Lower leg skin (tissue), 4 donors: ENCODE measurements at regions of chr2 and their contacts with region 1.

Region 1: GRCh38 chr2:132547074-132547687 is 122.8 kb downstream of the LYPD1 start:
- DNase-seq: peak; percentile 72 to 90
- H3K4me3 ChIP-seq: no peak overlapping the region
- CTCF ChIP-seq: peak in 1 of 3 donors; percentile 31
- POLR2A ChIP-seq: no peak

Region 2: GRCh38 chr2:133171393-133172004 is 624.3 kb after region 1 on chr2:
- intact Hi-C with region 1: loop called (anchors 10 kb)
- DNase-seq: peak in 1 of 2 donors; percentile 14
- H3K4me3 ChIP-seq: no peak overlapping the region
- CTCF ChIP-seq: no peak
- POLR2A ChIP-seq: no peak

Region 3: GRCh38 chr2:133855526-133855925 is 1308.3 kb after region 1 on chr2:
- intact Hi-C with region 1: loop called (anchors 10 kb)
- DNase-seq: no peak
- H3K4me3 ChIP-seq: no peak overlapping the region
- CTCF ChIP-seq: no peak
- POLR2A ChIP-seq: no peak